BJ (cell line): ENCODE measurements at regions of chr1 and their contacts with region 1.

Region 1: GRCh38 chr1:44571712-44572571 is 102.3 kb downstream of the TMEM53 start:
- DNase-seq: no peak
- H3K4me3 ChIP-seq: no peak overlapping the region
- H3K27me3 ChIP-seq: peaks cover 13% of the 10 kb centered on the region
- CTCF ChIP-seq: peak; percentile 38

Region 2: GRCh38 chr1:44553771-44554170 is 18.2 kb before region 1 on chr1:
- CTCF ChIA-PET with region 1: interaction called, 10 read pairs
- POLR2A ChIA-PET with region 1: no interaction called
- DNase-seq: no peak
- H3K4me3 ChIP-seq: no peak overlapping the region
- H3K27me3 ChIP-seq: peaks cover 9% of the 10 kb centered on the region
- CTCF ChIP-seq: no peak

Region 3: GRCh38 chr1:44645476-44646244 is 73.7 kb after region 1 on chr1:
- CTCF ChIA-PET with region 1: no interaction called
- POLR2A ChIA-PET with region 1: no interaction called
- DNase-seq: no peak
- H3K4me3 ChIP-seq: no peak overlapping the region
- H3K27me3 ChIP-seq: no peaks in the 10 kb centered on the region
- CTCF ChIP-seq: no peak